GM10248 (cell line): ENCODE measurements at regions of chr2 and their contacts with region 1.

Region 1: DNA sequence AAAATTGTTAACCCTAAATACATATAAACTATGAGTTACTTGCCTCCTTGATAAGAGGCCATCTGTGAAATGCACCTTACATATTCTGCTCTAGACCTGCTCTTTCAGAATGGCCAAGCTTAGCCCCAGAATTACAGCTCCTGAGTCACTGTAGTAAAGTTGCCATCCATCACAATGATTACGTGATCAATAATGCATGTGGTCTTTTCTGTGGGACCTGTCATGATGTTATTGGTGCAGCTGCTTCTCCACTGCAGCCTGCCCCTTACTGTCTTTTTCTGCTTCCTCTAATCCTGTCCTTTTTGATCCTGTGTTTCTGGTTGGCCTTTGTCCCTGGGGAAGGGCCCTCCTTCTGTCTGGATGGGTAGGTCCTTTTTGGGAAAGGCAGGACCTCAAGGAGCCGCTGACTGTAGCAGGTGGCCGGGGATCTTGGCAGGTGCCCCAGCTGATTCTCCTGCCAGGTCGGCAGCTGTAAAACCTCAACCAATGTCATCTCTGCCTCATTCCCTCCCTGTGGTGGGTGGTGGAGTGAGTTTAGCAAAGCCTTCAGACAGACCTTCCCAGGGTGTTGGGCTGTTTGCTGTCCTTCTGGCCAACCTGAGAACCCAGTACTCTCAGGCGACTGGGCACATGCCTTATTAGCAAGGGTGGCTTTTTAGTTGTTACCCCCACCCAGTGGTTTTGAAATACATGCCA is 126.2 kb upstream of the EML6 start:
- DNase-seq: no peak
- CTCF ChIP-seq: no peak

Region 2: GRCh38 chr2:54041135-54041534 is 556.2 kb before region 1 on chr2:
- CTCF ChIA-PET with region 1: no interaction called
- POLR2A ChIA-PET with region 1: no interaction called
- DNase-seq: no peak
- CTCF ChIP-seq: no peak

Region 3: GRCh38 chr2:54579684-54580620 is 17.3 kb before region 1 on chr2:
- CTCF ChIA-PET with region 1: interaction called, 35 read pairs
- POLR2A ChIA-PET with region 1: interaction called, 4 read pairs
- DNase-seq: peak; percentile 61
- CTCF ChIP-seq: no peak